ENCODE measurements at regions of chr6 and their contacts with region 1.

Region 1: GRCh38 chr6:56637640-56638039 is 5.0 kb downstream of the DST start:
- DNase-seq: peak; percentile 9 to 68
- ATAC-seq: peak; percentile 43 to 65; a peak in 3 of 6 replicates
- H3K4me3 ChIP-seq: no peak overlapping the region
- H3K27ac ChIP-seq: peak overlapping the region in 1 of 2 experiments; percentile 32; a peak in 2 of 6 replicates
- H3K4me1 ChIP-seq: peaks cover 54% of the 10 kb centered on the region
- CTCF ChIP-seq: peak; percentile 70
- EP300 ChIP-seq: no peak
- POLR2A ChIP-seq: no peak
- RAD21 ChIP-seq: peak; percentile 73 to 81

Region 2: GRCh38 chr6:56613247-56613851 is 24.3 kb before region 1 on chr6:
- CTCF ChIA-PET with region 1: no interaction called
- POLR2A ChIA-PET with region 1: no interaction called
- DNase-seq: no peak
- ATAC-seq: no peak
- H3K4me3 ChIP-seq: no peak overlapping the region
- H3K27ac ChIP-seq: no peak overlapping the region
- H3K4me1 ChIP-seq: no peaks in the 10 kb centered on the region
- CTCF ChIP-seq: no peak
- EP300 ChIP-seq: no peak
- POLR2A ChIP-seq: no peak
- RAD21 ChIP-seq: no peak

Region 3: DNA sequence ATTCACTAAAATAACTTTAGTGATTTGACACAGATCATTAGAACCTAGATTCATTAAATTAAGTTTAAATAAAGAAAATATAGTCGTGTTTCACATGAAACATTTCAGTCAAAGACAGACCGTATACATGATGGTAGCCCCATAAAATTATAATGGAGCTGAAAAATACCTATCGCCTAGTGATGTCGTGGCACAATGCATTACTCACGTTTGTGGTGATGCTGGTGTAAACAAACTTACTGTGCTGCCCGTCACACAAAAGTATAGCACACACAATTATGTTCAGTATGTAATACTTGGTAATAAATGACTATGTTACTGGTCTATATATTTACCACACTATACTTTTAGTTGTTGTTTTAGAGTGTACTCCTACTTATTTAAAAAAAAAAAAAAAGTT is 12.3 kb before region 1 on chr6:
- CTCF ChIA-PET with region 1: interaction called, 17 read pairs
- POLR2A ChIA-PET with region 1: no interaction called
- DNase-seq: peak in 1 of 2 experiments; percentile 31
- ATAC-seq: peak in 1 of 2 experiments; percentile 24; a peak in 1 of 6 replicates
- H3K4me3 ChIP-seq: peak overlapping the region; percentile 30; the same call in 2 of the 3 replicates
- H3K27ac ChIP-seq: peak overlapping the region; percentile 79 to 86
- H3K4me1 ChIP-seq: peaks cover 36% of the 10 kb centered on the region
- CTCF ChIP-seq: no peak
- EP300 ChIP-seq: no peak
- POLR2A ChIP-seq: no peak
- RAD21 ChIP-seq: no peak

Region 4: GRCh38 chr6:56677559-56677958 is 39.9 kb after region 1 on chr6:
- CTCF ChIA-PET with region 1: interaction called, 13 read pairs
- POLR2A ChIA-PET with region 1: no interaction called
- DNase-seq: no peak
- ATAC-seq: no peak
- H3K4me3 ChIP-seq: no peak overlapping the region
- H3K27ac ChIP-seq: no peak overlapping the region
- H3K4me1 ChIP-seq: peaks cover 13% of the 10 kb centered on the region; the same call in 2 of the 3 replicates
- CTCF ChIP-seq: no peak
- EP300 ChIP-seq: no peak
- POLR2A ChIP-seq: no peak
- RAD21 ChIP-seq: no peak

Region 5: DNA sequence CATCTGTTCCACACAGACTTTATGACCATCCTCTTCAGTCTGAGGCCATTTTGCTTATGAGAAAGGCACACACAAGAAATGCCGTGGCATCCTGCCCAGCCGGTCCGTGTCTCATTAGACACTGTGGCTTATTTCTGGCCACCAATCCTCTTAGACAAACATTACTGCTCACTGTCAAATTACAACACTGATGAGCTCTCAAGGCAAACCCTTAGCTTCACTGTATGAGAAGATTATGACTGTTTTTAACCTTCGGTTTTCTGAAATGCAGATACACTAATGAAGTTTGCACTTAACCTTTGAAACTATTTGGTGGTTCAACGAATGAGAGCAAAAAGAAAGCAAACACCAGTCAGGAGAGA is 55.6 kb after region 1 on chr6:
- CTCF ChIA-PET with region 1: interaction called, 24 read pairs
- POLR2A ChIA-PET with region 1: interaction called, 4 read pairs
- DNase-seq: peak in 1 of 2 experiments; percentile 56
- ATAC-seq: peak; percentile 57 to 72; a peak in 5 of 6 replicates
- H3K4me3 ChIP-seq: peak overlapping the region; percentile 41; the same call in 2 of the 3 replicates
- H3K27ac ChIP-seq: peak overlapping the region; percentile 73 to 84
- H3K4me1 ChIP-seq: peaks cover 67% of the 10 kb centered on the region
- CTCF ChIP-seq: no peak
- EP300 ChIP-seq: no peak
- POLR2A ChIP-seq: no peak
- RAD21 ChIP-seq: no peak

Region 6: DNA sequence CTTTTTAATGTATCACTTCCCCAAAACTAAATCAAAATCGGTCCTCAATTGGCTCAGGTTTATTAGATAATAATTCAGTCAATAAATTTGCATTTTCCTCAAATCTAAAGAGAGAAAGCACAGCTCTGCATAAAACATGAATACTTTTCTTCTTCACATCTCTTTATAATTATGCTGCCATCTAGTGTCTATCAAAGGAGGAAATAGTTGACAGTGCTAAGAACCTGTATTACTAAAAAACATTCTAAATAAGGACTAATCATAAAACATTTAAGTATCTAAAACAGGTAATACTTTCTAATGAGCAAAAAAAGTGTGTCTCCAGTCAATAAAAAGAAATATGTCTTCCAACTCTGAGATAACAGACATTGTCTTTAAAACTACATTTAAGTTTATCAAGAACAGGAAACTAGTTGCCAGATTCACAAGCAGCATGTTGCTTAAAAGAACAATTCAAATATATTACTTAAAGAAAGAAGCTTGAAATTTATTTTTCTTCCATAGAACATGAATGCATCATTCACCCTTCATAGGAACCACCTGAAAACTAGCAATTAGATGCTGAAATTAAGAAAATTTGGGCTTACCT is 61.5 kb after region 1 on chr6:
- CTCF ChIA-PET with region 1: interaction called, 24 read pairs
- POLR2A ChIA-PET with region 1: no interaction called
- DNase-seq: no peak
- ATAC-seq: peak in 1 of 2 experiments; percentile 67; a peak in 2 of 6 replicates
- H3K4me3 ChIP-seq: no peak overlapping the region
- H3K27ac ChIP-seq: peak overlapping the region in 1 of 2 experiments; percentile 35; a peak in 1 of 6 replicates
- H3K4me1 ChIP-seq: peaks cover 44% of the 10 kb centered on the region
- CTCF ChIP-seq: peak; percentile 56; the same call in 2 of the 3 replicates
- EP300 ChIP-seq: no peak
- POLR2A ChIP-seq: no peak
- RAD21 ChIP-seq: peak; percentile 54 to 68

Region 7: DNA sequence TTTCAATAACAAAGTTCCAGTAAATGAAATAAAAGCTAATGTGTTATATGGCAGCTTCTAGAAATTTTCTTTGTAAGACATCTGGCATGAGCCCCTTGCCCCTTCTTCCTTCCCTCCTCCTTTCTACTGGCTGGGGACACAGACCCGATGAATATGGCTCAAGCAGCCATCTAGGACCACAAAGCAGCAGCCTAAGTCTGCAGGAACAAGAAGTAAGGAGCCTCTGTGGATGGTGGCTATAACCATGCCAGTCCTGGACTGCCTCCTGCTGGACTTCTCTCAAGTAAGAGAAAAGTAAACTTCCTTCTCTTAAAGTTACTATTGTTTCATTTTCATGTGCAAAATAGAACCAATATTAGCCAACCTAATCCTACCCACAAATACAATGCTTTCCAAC is 119.9 kb after region 1 on chr6:
- CTCF ChIA-PET with region 1: interaction called, 14 read pairs
- POLR2A ChIA-PET with region 1: no interaction called
- DNase-seq: peak in 1 of 2 experiments; percentile 72
- ATAC-seq: peak; percentile 77 to 85; a peak in 4 of 6 replicates
- H3K4me3 ChIP-seq: no peak overlapping the region
- H3K27ac ChIP-seq: peak overlapping the region in 1 of 2 experiments; percentile 53; a peak in 3 of 6 replicates
- H3K4me1 ChIP-seq: peaks cover 45% of the 10 kb centered on the region
- CTCF ChIP-seq: peak; percentile 48
- EP300 ChIP-seq: no peak
- POLR2A ChIP-seq: no peak
- RAD21 ChIP-seq: peak; percentile 74 to 80

Region 8: DNA sequence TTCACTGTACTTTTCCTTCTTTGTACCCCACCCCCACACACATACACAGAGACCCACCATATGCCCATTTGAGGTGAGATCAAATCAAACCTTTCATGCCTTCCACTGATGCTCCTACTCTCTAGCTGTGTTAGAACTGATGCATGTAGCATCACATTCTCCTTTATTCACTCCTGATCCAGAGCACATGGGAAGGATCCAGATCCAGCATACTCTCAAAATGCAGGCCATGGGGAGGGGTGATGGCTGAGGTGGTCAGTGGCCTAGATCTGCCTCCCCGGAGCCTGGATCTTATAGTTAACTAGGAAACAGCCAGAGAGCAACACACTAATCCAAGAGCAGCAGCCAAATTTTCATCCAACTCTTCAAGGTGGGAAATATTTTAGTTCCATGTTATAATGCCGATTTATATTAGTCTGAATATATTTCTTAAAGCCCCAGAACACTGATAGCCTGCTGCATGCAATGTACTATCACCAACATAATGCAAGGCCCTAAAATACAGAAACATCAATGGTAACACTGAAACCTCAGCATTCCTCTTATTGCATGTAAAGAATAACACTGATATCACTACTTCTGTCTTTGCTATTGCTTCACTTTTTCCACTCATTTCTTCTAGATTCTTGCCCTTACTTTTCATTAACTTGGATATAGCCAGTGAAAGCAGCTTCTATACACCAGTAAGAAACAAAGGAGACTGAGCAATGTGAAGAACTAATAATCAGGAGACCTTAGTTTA is 190.4 kb after region 1 on chr6:
- CTCF ChIA-PET with region 1: no interaction called
- POLR2A ChIA-PET with region 1: no interaction called
- DNase-seq: no peak
- ATAC-seq: no peak
- H3K4me3 ChIP-seq: no peak overlapping the region
- H3K27ac ChIP-seq: no peak overlapping the region
- H3K4me1 ChIP-seq: peaks cover 15% of the 10 kb centered on the region; the same call in 2 of the 3 replicates
- CTCF ChIP-seq: no peak
- EP300 ChIP-seq: no peak
- POLR2A ChIP-seq: no peak
- RAD21 ChIP-seq: no peak

Measured in A549 (cell line).